ENCODE measurements at regions of chr1 and their contacts with region 1.

Region 1: GRCh38 chr1:76425201-76426145 is 350.9 kb downstream of the ST6GALNAC3 start:
- DNase-seq: no peak
- CTCF ChIP-seq: no peak

Region 2: DNA sequence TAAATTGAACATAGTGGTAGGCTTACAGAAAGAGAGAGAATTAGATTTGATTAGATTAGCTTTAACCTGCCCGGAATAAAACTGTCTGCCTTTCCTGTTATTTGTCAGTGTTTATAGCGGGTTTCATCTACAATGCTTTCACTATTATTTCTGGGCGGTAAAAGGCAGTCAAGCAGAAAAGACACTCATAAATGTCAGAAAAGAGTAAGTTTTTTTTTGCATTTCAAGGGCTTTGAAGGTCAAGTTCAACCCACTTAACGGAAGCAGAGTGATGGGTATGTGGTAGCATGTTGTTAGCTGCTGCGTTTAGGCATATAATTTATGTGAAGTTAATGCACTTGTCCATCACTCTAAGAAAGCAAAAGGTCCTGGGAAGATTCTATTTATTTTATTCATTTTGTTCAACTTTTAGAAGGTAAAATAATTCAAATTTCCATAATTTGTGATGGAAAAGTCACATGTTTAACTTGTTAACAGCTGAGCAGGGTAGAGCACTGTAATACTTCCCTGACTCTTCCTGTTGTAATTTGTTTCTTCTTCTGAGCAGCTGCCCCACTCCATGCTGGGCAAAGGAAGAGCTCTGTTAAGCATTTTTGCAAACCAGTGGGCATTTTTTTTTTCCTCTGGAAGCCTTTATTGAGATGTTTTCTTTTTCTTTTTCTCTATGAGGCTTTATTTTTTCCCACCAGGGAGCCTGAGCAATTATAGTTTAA is 130.8 kb before region 1 on chr1:
- in situ Hi-C with region 1: no loop called
- DNase-seq: no peak
- CTCF ChIP-seq: no peak

Region 3: GRCh38 chr1:76330991-76331603 is 94.4 kb before region 1 on chr1:
- in situ Hi-C with region 1: loop called (anchors 25 kb)
- DNase-seq: peak; percentile 28
- CTCF ChIP-seq: peak; percentile 80

Region 4: GRCh38 chr1:77044136-77044849 is 618.8 kb after region 1 on chr1:
- in situ Hi-C with region 1: no loop called
- DNase-seq: no peak
- CTCF ChIP-seq: no peak